Activated B cell treated with CpG ODN at 0.5 μM for 24 hours (primary cell): ENCODE measurements at regions of chr2 and their contacts with region 1.

Region 1: GRCh38 chr2:13006829-13007717 is 290.3 kb downstream of the TRIB2 start:
- DNase-seq: peak; percentile 21
- ATAC-seq: peak; percentile 65
- H3K4me3 Mint-ChIP-seq: no peak overlapping the region
- H3K27ac Mint-ChIP-seq: no peak overlapping the region
- H3K4me1 Mint-ChIP-seq: peaks cover 3% of the 10 kb centered on the region
- H3K27me3 Mint-ChIP-seq: peaks cover 17% of the 10 kb centered on the region
- CTCF ChIP-seq: peak; percentile 30

Region 2: DNA sequence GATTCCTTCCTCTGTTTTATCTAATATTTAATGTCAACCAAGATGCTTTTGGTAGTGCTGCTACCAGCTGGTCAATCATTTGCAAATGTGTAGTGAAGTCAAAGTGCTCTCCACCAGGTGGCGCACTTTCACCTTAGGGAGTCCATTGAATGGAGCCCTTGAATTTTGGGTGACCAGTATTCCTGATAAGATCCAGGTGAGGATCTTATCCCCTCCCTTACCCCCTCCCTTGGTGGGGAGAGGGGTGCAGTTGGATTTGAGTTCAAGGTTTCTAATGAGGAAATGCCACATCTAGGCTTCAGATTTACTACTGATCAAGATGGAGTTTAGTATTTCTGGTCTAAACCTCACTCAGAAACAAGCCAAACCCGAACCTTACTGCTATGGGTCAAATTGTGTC is 1529.1 kb before region 1 on chr2:
- CTCF ChIA-PET with region 1: interaction called, 17 read pairs
- POLR2A ChIA-PET with region 1: no interaction called
- intact Hi-C with region 1: loop called (anchors 1 kb)
- DNase-seq: peak; percentile 59
- ATAC-seq: peak; percentile 71
- H3K4me3 Mint-ChIP-seq: no peak overlapping the region
- H3K27ac Mint-ChIP-seq: no peak overlapping the region
- H3K4me1 Mint-ChIP-seq: peaks cover under 1% of the 10 kb centered on the region
- H3K27me3 Mint-ChIP-seq: peaks cover 17% of the 10 kb centered on the region
- CTCF ChIP-seq: peak; percentile 75

Region 3: DNA sequence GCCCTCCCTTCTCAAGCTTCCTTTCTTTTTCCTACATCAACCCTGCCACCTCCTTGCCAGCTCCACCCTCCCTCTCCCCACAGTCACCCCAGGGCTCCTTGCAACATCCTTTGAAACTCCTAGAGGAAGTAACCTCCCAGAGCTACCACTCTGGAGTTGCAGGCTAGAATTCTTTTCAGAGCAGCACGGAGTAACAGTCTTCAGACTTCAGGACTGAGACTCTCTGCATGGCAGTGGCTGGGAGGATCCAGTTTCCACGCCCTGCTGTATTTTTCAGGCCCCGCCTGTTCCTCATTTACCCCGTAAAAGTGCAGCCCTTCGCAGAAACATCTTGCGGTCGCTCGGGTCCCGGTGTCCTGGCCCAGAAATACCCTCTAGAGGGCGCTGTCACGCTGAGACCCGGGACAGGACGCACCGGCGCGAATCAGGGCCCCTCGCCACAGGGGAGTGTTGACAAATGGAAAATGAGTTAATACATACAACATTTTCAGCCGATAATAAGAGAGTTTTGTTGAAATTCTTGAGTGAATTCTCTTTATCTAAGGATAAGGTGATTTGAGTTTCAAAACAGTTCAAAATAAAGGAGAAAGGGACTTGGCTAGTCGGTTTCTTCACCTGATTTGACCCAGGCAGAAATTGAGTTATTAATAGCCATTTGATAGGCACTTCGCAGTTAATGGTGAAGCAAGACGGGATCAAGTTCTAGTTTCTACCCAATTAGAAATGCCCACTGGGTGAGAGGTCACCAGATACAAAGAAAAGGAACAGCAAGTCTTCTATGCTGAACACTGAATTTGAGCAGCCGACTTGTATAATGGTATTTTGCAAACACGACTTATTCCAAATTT is 1318.6 kb before region 1 on chr2:
- CTCF ChIA-PET with region 1: interaction called, 4 read pairs
- POLR2A ChIA-PET with region 1: no interaction called
- intact Hi-C with region 1: loop called (anchors 2 kb)
- DNase-seq: peak; percentile 68
- ATAC-seq: peak; percentile 87
- H3K4me3 Mint-ChIP-seq: peak overlapping the region; percentile 39
- H3K27ac Mint-ChIP-seq: no peak overlapping the region
- H3K4me1 Mint-ChIP-seq: peaks cover 9% of the 10 kb centered on the region
- H3K27me3 Mint-ChIP-seq: peaks cover 8% of the 10 kb centered on the region
- CTCF ChIP-seq: no peak

Region 4: GRCh38 chr2:11829947-11830707 is 1176.9 kb before region 1 on chr2:
- CTCF ChIA-PET with region 1: interaction called, 62 read pairs
- POLR2A ChIA-PET with region 1: interaction called, 5 read pairs
- intact Hi-C with region 1: loop called (anchors 1 kb)
- DNase-seq: peak; percentile 40
- ATAC-seq: peak; percentile 66
- H3K4me3 Mint-ChIP-seq: peak overlapping the region; percentile 75
- H3K27ac Mint-ChIP-seq: peak overlapping the region; percentile 75
- H3K4me1 Mint-ChIP-seq: peaks cover 64% of the 10 kb centered on the region
- H3K27me3 Mint-ChIP-seq: no peaks in the 10 kb centered on the region
- CTCF ChIP-seq: no peak

Region 5: GRCh38 chr2:12032398-12032797 is 974.7 kb before region 1 on chr2:
- CTCF ChIA-PET with region 1: no interaction called
- POLR2A ChIA-PET with region 1: no interaction called
- intact Hi-C with region 1: loop called (anchors 1 kb)
- DNase-seq: no peak
- ATAC-seq: peak; percentile 86
- H3K4me3 Mint-ChIP-seq: peak overlapping the region; percentile 62
- H3K27ac Mint-ChIP-seq: peak overlapping the region; percentile 74
- H3K4me1 Mint-ChIP-seq: peaks cover 64% of the 10 kb centered on the region
- H3K27me3 Mint-ChIP-seq: no peaks in the 10 kb centered on the region
- CTCF ChIP-seq: no peak

Region 6: GRCh38 chr2:12416600-12416999 is 590.5 kb before region 1 on chr2:
- CTCF ChIA-PET with region 1: interaction called, 5 read pairs
- POLR2A ChIA-PET with region 1: no interaction called
- intact Hi-C with region 1: loop called (anchors 1 kb)
- DNase-seq: peak; percentile 22
- ATAC-seq: peak; percentile 69
- H3K4me3 Mint-ChIP-seq: no peak overlapping the region
- H3K27ac Mint-ChIP-seq: no peak overlapping the region
- H3K4me1 Mint-ChIP-seq: peaks cover 36% of the 10 kb centered on the region
- H3K27me3 Mint-ChIP-seq: no peaks in the 10 kb centered on the region
- CTCF ChIP-seq: no peak

Region 7: DNA sequence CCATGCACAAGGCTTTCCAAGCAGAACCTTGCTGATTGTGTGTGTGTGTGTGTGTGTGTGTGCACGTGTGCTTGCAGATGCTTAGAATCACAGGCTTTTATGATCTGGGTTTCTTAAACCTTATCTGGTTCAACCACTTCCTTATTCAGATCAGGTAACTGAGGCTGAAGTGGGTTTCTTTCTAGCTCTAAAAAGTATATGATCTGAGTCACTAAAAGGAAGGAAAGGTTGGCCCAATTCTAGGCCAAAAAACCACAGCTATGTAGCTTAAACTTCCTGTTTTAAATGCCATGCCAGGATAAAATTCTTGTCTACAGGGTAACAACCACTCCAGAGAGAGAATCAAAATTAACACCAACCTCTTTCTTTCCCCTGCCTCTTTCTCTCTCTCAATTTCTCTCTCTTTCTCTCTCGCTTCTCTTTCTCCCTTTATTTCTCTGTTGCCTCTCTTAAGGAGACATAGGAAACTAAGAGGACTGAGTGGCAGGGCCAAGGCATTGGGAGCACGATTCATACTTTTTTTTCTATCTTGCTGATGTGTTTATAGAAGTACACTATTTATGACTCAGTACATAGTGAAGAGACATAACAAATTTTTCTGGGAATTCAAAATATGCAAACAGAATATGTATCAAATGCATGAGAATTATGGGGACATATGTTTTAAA is 150.0 kb before region 1 on chr2:
- CTCF ChIA-PET with region 1: no interaction called
- POLR2A ChIA-PET with region 1: no interaction called
- intact Hi-C with region 1: no loop called
- DNase-seq: no peak
- ATAC-seq: peak; percentile 49
- H3K4me3 Mint-ChIP-seq: no peak overlapping the region
- H3K27ac Mint-ChIP-seq: no peak overlapping the region
- H3K4me1 Mint-ChIP-seq: peaks cover 9% of the 10 kb centered on the region
- H3K27me3 Mint-ChIP-seq: no peaks in the 10 kb centered on the region
- CTCF ChIP-seq: no peak

Region 8: DNA sequence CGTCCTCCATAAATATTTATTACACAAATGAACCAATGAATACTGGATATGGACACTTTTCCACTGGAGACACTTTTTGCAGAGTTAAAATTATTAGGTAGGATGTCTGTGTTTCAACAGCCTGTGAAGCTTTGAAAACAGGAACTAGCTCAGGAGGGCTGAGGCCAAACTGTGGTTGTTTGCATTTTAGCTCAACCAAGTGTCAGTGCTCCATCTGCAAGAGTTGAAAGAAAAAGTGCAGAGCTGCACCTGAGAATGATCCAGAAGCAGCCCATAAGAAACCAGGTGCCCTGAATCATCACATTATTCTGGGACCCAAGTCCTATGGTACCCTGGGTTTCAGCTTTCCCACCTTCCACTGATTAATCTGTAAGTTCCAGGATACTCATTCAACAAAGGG is 109.9 kb before region 1 on chr2:
- CTCF ChIA-PET with region 1: no interaction called
- POLR2A ChIA-PET with region 1: no interaction called
- intact Hi-C with region 1: no loop called
- DNase-seq: no peak
- ATAC-seq: no peak
- H3K4me3 Mint-ChIP-seq: no peak overlapping the region
- H3K27ac Mint-ChIP-seq: no peak overlapping the region
- H3K4me1 Mint-ChIP-seq: peaks cover 10% of the 10 kb centered on the region
- H3K27me3 Mint-ChIP-seq: peaks cover 8% of the 10 kb centered on the region
- CTCF ChIP-seq: no peak

Region 9: GRCh38 chr2:12931186-12931844 is 75.8 kb before region 1 on chr2:
- CTCF ChIA-PET with region 1: interaction called, 17 read pairs
- POLR2A ChIA-PET with region 1: no interaction called
- intact Hi-C with region 1: loop called (anchors 2 kb)
- DNase-seq: no peak
- ATAC-seq: peak; percentile 49
- H3K4me3 Mint-ChIP-seq: no peak overlapping the region
- H3K27ac Mint-ChIP-seq: no peak overlapping the region
- H3K4me1 Mint-ChIP-seq: peaks cover 15% of the 10 kb centered on the region
- H3K27me3 Mint-ChIP-seq: no peaks in the 10 kb centered on the region
- CTCF ChIP-seq: no peak